ENCODE measurements at regions of chr1 and their contacts with region 1.

Region 1: GRCh38 chr1:203558064-203558760 is 64.3 kb downstream of the OPTC start:
- DNase-seq: peak; percentile 97
- H3K4me3 ChIP-seq: no peak overlapping the region
- H3K27ac ChIP-seq: peak overlapping the region; percentile 50
- H3K4me1 ChIP-seq: peaks cover 40% of the 10 kb centered on the region
- H3K27me3 ChIP-seq: no peaks in the 10 kb centered on the region
- CTCF ChIP-seq: no peak

Region 2: GRCh38 chr1:203320591-203321272 is 237.5 kb before region 1 on chr1:
- CTCF ChIA-PET with region 1: no interaction called
- dilution Hi-C with region 1: no loop called
- in situ Hi-C with region 1: no loop called
- intact Hi-C with region 1: no loop called
- DNase-seq: peak; percentile 51
- H3K4me3 ChIP-seq: no peak overlapping the region
- H3K27ac ChIP-seq: no peak overlapping the region
- H3K4me1 ChIP-seq: peaks cover 3% of the 10 kb centered on the region
- H3K27me3 ChIP-seq: no peaks in the 10 kb centered on the region
- CTCF ChIP-seq: no peak

Region 3: GRCh38 chr1:203440771-203441170 is 117.4 kb before region 1 on chr1:
- CTCF ChIA-PET with region 1: no interaction called
- dilution Hi-C with region 1: no loop called
- in situ Hi-C with region 1: no loop called
- intact Hi-C with region 1: no loop called
- DNase-seq: peak; percentile 30
- H3K4me3 ChIP-seq: no peak overlapping the region
- H3K27ac ChIP-seq: no peak overlapping the region
- H3K4me1 ChIP-seq: no peaks in the 10 kb centered on the region
- H3K27me3 ChIP-seq: peaks cover 2% of the 10 kb centered on the region
- CTCF ChIP-seq: peak; percentile 12 to 58

Region 4: GRCh38 chr1:203512830-203513611 is 45.2 kb before region 1 on chr1:
- CTCF ChIA-PET with region 1: no interaction called
- dilution Hi-C with region 1: no loop called
- in situ Hi-C with region 1: no loop called
- intact Hi-C with region 1: loop called (anchors 2 kb)
- DNase-seq: peak; percentile 86
- H3K4me3 ChIP-seq: no peak overlapping the region
- H3K27ac ChIP-seq: peak overlapping the region; percentile 73
- H3K4me1 ChIP-seq: peaks cover 27% of the 10 kb centered on the region
- H3K27me3 ChIP-seq: no peaks in the 10 kb centered on the region
- CTCF ChIP-seq: no peak

Region 5: DNA sequence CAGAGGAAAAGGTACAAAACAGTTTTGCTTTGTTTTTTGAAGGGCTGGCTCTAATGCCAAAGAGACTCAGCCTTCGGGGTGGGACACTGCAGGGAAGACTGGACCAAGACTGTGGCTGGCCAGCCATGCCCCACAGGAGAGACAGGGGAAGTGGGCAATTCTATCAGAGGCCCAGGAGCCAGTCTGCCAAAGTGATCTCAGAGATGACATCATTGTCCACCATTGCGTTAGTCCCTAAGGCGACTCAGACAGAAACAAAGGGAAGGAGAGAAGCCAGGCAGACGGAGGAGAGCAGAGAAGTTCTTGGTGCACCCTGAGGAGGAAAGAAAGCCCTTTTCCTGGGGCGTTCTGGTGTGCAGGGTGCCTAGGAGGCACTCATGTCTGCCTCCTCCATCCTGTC is 37.9 kb before region 1 on chr1:
- CTCF ChIA-PET with region 1: no interaction called
- dilution Hi-C with region 1: no loop called
- in situ Hi-C with region 1: no loop called
- intact Hi-C with region 1: loop called (anchors 2 kb)
- DNase-seq: no peak
- H3K4me3 ChIP-seq: no peak overlapping the region
- H3K27ac ChIP-seq: no peak overlapping the region
- H3K4me1 ChIP-seq: no peaks in the 10 kb centered on the region
- H3K27me3 ChIP-seq: no peaks in the 10 kb centered on the region
- CTCF ChIP-seq: no peak

Region 6: GRCh38 chr1:203534527-203535230 is 23.5 kb before region 1 on chr1:
- CTCF ChIA-PET with region 1: interaction called, 12 read pairs
- dilution Hi-C with region 1: no loop called
- in situ Hi-C with region 1: no loop called
- intact Hi-C with region 1: loop called (anchors 1 kb)
- DNase-seq: peak; percentile 98
- H3K4me3 ChIP-seq: no peak overlapping the region
- H3K27ac ChIP-seq: peak overlapping the region; percentile 69
- H3K4me1 ChIP-seq: peaks cover 40% of the 10 kb centered on the region
- H3K27me3 ChIP-seq: no peaks in the 10 kb centered on the region
- CTCF ChIP-seq: no peak

Region 7: GRCh38 chr1:203600782-203601736 is 42.8 kb after region 1 on chr1:
- CTCF ChIA-PET with region 1: no interaction called
- dilution Hi-C with region 1: no loop called
- in situ Hi-C with region 1: no loop called
- intact Hi-C with region 1: loop called (anchors 2 kb)
- DNase-seq: no peak
- H3K4me3 ChIP-seq: no peak overlapping the region
- H3K27ac ChIP-seq: no peak overlapping the region
- H3K4me1 ChIP-seq: peaks cover 13% of the 10 kb centered on the region
- H3K27me3 ChIP-seq: no peaks in the 10 kb centered on the region
- CTCF ChIP-seq: no peak

Region 8: GRCh38 chr1:203692565-203693470 is 134.6 kb after region 1 on chr1:
- CTCF ChIA-PET with region 1: no interaction called
- dilution Hi-C with region 1: no loop called
- in situ Hi-C with region 1: no loop called
- intact Hi-C with region 1: loop called (anchors 1 kb)
- DNase-seq: peak; percentile 97
- H3K4me3 ChIP-seq: no peak overlapping the region
- H3K27ac ChIP-seq: peak overlapping the region; percentile 97
- H3K4me1 ChIP-seq: peaks cover 28% of the 10 kb centered on the region
- H3K27me3 ChIP-seq: no peaks in the 10 kb centered on the region
- CTCF ChIP-seq: no peak